ENCODE measurements at regions of chr4 and their contacts with region 1.

Region 1: GRCh38 chr4:94595879-94596483 is 144.2 kb downstream of the PDLIM5 start:
- DNase-seq: no peak
- ATAC-seq: peak; percentile 28

Region 2: DNA sequence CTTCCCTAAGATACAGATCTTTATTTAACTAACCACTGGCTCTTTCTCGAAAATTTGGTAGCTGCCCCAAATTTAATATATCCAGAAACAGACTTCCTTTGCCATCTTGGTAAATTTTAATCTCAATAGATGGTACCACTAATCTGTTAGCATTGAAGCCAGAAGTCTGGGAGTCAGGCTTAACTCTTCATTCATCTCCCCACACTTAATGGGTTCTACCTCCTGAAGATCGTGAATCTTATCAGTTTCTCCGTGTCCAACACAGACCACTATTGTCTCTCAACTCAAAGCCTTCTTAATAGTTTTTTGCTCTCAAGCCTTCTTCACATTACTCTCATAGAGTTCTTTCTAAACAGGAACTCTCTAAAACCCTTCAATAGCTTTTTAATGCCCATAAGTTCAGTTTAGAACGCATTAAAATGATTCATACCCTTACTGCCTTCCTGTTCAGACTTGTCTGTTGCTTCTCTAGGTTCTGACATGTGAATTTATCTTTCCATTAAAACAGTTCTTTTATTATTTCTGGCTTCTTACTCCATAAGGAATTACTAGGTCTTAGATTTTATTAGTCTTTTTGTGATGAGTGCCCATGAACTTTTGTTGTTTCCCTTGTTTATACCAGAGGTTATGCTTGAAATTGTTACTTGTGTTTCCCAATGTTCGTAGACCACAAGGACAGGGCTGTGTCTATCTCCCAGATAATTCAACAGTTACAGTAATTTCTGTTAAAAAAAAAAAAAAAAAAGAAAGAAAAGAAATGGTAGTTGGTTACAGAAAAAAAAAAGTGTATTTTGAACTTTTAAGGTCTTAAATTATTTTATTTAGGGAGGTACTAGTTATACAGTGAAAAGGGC is 333.6 kb before region 1 on chr4:
- intact Hi-C with region 1: no loop called
- DNase-seq: no peak
- ATAC-seq: no peak

Region 3: DNA sequence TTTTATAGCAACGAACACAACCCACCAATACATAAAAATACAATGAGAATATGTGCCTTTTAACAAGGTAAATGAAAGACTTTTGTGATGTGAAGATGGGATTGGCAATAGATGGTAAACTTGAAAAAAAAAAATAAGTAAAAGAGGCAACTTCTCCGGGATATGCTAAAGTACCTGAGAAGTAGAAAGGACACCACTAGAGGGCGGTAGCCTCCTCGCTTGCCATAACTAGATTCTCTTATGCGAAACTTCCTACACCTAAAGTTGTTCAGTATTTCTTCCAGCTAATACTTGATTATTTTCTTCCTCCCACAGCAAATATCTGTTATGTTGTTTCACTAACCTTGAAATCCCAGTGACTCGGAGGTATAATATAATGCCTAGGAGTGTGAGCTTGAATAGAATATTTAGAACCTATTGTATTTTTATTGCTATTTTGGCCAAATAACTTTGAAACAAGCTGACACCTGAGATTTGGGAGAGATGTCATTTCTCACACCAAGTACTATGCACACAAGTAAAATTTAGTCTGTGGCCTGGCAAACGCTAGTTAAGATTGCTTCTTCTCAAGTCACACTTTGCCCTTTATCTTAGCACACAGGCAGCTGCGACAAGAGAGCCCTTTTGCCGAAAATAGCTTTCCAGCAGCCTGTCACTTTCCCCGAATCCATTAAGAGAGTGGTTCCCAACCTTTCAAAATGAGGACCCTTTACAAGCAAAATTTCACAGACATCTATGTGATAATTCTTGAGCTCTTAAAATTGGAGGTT is 189.1 kb before region 1 on chr4:
- intact Hi-C with region 1: loop called (anchors 5 kb)
- DNase-seq: peak; percentile 69
- ATAC-seq: peak; percentile 56

Region 4: GRCh38 chr4:94798808-94799207 is 202.8 kb after region 1 on chr4:
- intact Hi-C with region 1: no loop called
- DNase-seq: no peak
- ATAC-seq: no peak